AG04450 (cell line): ENCODE measurements at regions of chr12 and their contacts with region 1.

Region 1: GRCh38 chr12:7219599-7220243 is 30.2 kb downstream of the PEX5 start:
- DNase-seq: peak; percentile 33
- H3K4me3 ChIP-seq: no peak overlapping the region
- H3K27ac ChIP-seq: no peak overlapping the region
- H3K27me3 ChIP-seq: peaks cover 4% of the 10 kb centered on the region
- CTCF ChIP-seq: peak; percentile 94

Region 2: GRCh38 chr12:7361265-7361664 is 141.5 kb after region 1 on chr12:
- CTCF ChIA-PET with region 1: no interaction called
- POLR2A ChIA-PET with region 1: no interaction called
- DNase-seq: no peak
- H3K4me3 ChIP-seq: no peak overlapping the region
- H3K27ac ChIP-seq: no peak overlapping the region
- H3K27me3 ChIP-seq: no peaks in the 10 kb centered on the region
- CTCF ChIP-seq: no peak

Region 3: DNA sequence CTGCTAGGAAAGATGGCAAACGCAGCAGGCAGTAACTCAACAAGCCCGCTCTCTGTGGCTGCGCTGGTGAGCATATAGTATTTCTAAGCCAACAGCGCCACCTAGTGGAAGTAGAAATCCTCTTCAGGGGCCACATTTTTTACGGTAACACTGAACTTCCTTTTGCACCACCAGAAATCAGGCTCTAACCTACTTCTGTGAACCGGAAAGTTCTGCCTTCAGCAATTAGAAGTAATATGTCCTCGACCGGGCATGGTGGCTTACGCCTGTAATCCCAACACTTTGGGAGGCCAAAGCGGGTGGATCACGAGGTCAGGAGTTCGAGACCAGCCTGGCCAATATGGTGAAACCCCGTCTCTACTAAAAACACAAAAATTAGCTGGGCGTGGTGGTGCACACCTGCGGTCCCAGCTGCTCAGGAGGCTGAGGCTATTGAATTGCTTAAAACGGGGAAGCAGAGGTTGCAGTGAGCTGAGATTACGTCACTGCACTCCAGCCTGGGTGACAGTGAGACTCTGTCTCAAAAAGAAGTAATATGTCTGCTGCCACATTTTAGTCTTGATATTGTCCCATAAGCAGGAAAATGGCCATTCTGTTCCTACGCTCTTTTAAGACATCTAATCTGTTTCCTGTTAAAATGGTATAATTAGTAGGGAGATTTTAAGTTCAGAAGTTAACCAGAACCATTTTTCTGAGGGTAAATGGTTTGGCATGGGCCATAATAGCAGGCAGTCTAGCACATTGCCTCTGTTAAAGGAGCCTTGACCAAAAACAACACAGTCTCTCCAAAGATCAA is 419.2 kb after region 1 on chr12:
- CTCF ChIA-PET with region 1: interaction called, 27 read pairs
- POLR2A ChIA-PET with region 1: no interaction called
- DNase-seq: peak; percentile 37
- H3K4me3 ChIP-seq: no peak overlapping the region
- H3K27ac ChIP-seq: no peak overlapping the region
- H3K27me3 ChIP-seq: peaks cover 4% of the 10 kb centered on the region
- CTCF ChIP-seq: peak; percentile 80